Aorta (tissue), 5 donors: ENCODE measurements at regions of chr6 and their contacts with region 1.

Region 1: DNA sequence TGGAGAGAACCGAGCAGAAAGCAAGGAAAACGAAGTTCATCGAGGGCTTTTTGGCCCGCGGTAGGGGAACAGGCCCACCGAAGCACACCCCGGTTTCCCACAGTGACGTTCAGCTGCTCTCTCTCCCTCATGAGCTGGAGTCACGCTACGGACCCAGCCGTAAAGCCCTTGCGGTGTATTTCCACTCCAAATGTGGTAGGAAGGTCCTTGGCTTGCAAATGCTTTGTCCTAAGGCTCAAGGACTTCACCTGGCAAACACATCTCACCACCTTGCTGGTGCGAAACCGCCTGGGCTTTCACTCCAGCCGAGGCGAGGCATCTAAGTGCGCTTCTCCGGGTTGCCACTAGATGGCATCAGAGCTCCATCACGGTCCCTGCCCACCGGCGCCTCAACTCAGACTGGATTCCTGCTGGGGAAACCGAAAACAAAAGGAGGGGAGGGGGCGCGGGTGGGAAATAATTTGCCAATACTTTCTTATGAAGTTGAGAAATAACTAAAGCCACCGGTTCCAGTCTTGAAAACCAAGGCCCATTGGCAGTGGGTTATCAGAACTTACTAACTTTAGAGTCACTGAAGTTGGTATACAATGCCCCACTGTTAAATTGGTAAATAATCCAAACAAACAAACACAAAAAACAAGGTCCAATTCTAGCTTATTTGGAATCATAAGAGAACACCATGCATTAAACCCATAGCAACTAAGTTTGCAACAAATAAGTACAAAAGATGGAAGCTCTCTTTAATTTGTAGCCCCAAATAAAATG is 13.4 kb upstream of the FOXC1 start:
- DNase-seq: peak in 1 of 2 donors; percentile 88
- ATAC-seq: peak; percentile 89
- H3K4me3 ChIP-seq: peak overlapping the region in 1 of 2 donors; percentile 12
- H3K27ac ChIP-seq: no peak overlapping the region
- H3K4me1 ChIP-seq: no peaks in the 10 kb centered on the region
- H3K27me3 ChIP-seq: no peaks in the 10 kb centered on the region

Region 2: GRCh38 chr6:2196079-2196679 is 599.9 kb after region 1 on chr6:
- intact Hi-C with region 1: loop called (anchors 5 kb)
- DNase-seq: no peak
- ATAC-seq: peak; percentile 80
- H3K4me3 ChIP-seq: no peak overlapping the region
- H3K27ac ChIP-seq: no peak overlapping the region
- H3K4me1 ChIP-seq: peaks cover 0 to 2% of the 10 kb centered on the region in 2 donors
- H3K27me3 ChIP-seq: no peaks in the 10 kb centered on the region

Region 3: DNA sequence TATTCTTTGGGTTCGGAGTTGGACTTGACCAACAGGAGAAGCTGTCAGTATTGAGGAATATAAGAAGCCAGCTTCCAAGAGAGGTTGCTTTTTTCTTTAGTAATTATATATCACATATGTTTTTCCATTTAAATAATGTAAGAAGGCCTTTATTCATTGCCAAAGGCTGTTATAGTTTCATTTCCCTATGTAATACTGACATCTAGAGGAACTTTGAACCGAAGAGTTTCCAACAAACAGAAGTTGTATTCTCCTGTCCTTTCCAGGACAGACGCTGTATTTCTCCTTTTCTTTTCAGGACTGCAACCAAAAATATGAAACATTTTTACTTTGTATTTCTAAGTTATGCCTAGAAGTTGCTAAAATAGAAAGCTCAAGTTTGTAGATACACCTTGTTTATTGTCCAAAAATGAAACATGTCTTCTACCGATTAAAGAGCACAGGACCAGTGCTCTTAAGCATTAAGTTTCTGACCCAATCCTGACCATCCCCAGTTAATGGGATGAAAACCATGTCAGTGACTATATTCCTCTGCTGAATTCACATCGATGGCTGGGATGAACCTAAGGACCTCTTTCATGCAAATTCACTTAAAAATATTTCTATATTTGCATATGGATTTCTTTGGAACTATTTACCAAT is 1099.3 kb after region 1 on chr6:
- intact Hi-C with region 1: loop called (anchors 2 to 5 kb)
- DNase-seq: no peak
- ATAC-seq: no peak
- H3K4me3 ChIP-seq: no peak overlapping the region
- H3K27ac ChIP-seq: no peak overlapping the region
- H3K4me1 ChIP-seq: no peaks in the 10 kb centered on the region
- H3K27me3 ChIP-seq: no peaks in the 10 kb centered on the region

Region 4: GRCh38 chr6:2749969-2750600 is 1153.8 kb after region 1 on chr6:
- intact Hi-C with region 1: loop called (anchors 2 to 5 kb)
- DNase-seq: peak; percentile 59 to 84
- ATAC-seq: no peak
- H3K4me3 ChIP-seq: peak overlapping the region; percentile 21 to 33
- H3K27ac ChIP-seq: no peak overlapping the region
- H3K4me1 ChIP-seq: peaks cover 0 to 2% of the 10 kb centered on the region in 2 donors
- H3K27me3 ChIP-seq: no peaks in the 10 kb centered on the region